Endothelial cell of umbilical vein (primary cell): ENCODE measurements at regions of chr5 and their contacts with region 1.

Region 1: GRCh38 chr5:39148983-39149534 is 70.3 kb downstream of the FYB1 start:
- DNase-seq: peak; percentile 77
- H3K4me3 ChIP-seq: no peak overlapping the region
- H3K27ac ChIP-seq: peak overlapping the region; percentile 88
- H3K4me1 ChIP-seq: peaks cover 10% of the 10 kb centered on the region
- H3K27me3 ChIP-seq: no peaks in the 10 kb centered on the region
- CTCF ChIP-seq: peak; percentile 5 to 22
- POLR2A ChIP-seq: no peak

Region 2: DNA sequence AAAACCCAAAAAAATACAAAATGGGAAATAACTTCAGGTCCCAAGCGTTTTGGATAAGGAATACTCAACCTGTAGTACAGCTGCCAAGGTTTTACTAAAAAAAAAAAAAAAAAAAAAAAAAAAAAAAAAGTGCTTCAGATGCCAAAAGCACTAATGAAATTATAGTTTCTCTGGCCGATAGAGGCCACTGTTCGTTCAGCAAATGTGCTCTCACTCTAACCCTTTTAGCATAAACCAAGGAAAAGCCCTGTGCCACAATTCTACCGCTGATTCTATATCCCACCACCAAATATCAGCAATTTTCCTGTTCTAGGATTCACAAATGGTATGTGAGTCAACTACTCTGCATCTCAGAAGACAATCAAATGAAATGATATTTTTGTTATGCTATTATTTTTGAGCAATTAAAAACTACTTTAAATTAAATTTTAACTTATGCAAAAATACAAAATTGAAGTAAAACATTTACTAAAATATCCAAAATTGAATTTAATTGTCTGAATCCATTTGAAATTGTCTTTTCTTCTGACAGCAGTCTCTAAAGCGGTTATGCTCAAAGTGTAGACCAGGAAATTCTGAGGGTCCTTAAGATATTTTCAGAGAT is 154.6 kb before region 1 on chr5:
- CTCF ChIA-PET with region 1: interaction called, 3 read pairs
- POLR2A ChIA-PET with region 1: no interaction called
- dilution Hi-C with region 1: no loop called
- intact Hi-C with region 1: loop called (anchors 1 kb)
- DNase-seq: peak; percentile 76
- H3K4me3 ChIP-seq: no peak overlapping the region
- H3K27ac ChIP-seq: no peak overlapping the region
- H3K4me1 ChIP-seq: no peaks in the 10 kb centered on the region
- H3K27me3 ChIP-seq: no peaks in the 10 kb centered on the region
- CTCF ChIP-seq: peak; percentile 33 to 50
- POLR2A ChIP-seq: no peak

Region 3: GRCh38 chr5:39106322-39106721 is 42.7 kb before region 1 on chr5:
- CTCF ChIA-PET with region 1: no interaction called
- POLR2A ChIA-PET with region 1: no interaction called
- dilution Hi-C with region 1: no loop called
- intact Hi-C with region 1: loop called (anchors 5 kb)
- DNase-seq: no peak
- H3K4me3 ChIP-seq: no peak overlapping the region
- H3K27ac ChIP-seq: no peak overlapping the region
- H3K4me1 ChIP-seq: peaks cover 13% of the 10 kb centered on the region
- H3K27me3 ChIP-seq: no peaks in the 10 kb centered on the region
- CTCF ChIP-seq: peak in 1 of 2 donors; percentile 2
- POLR2A ChIP-seq: no peak

Region 4: GRCh38 chr5:39283231-39283818 is 134.3 kb after region 1 on chr5:
- CTCF ChIA-PET with region 1: no interaction called
- POLR2A ChIA-PET with region 1: no interaction called
- dilution Hi-C with region 1: no loop called
- intact Hi-C with region 1: loop called (anchors 1 kb)
- DNase-seq: peak; percentile 76
- H3K4me3 ChIP-seq: no peak overlapping the region
- H3K27ac ChIP-seq: no peak overlapping the region
- H3K4me1 ChIP-seq: no peaks in the 10 kb centered on the region
- H3K27me3 ChIP-seq: no peaks in the 10 kb centered on the region
- CTCF ChIP-seq: peak; percentile 50 to 67
- POLR2A ChIP-seq: no peak

Region 5: GRCh38 chr5:39376293-39376714 is 227.2 kb after region 1 on chr5:
- CTCF ChIA-PET with region 1: interaction called, 4 read pairs
- POLR2A ChIA-PET with region 1: no interaction called
- dilution Hi-C with region 1: no loop called
- intact Hi-C with region 1: loop called (anchors 5 kb)
- DNase-seq: peak; percentile 72
- H3K4me3 ChIP-seq: no peak overlapping the region
- H3K27ac ChIP-seq: no peak overlapping the region
- H3K4me1 ChIP-seq: no peaks in the 10 kb centered on the region
- H3K27me3 ChIP-seq: no peaks in the 10 kb centered on the region
- CTCF ChIP-seq: peak; percentile 57 to 71
- POLR2A ChIP-seq: no peak

Region 6: DNA sequence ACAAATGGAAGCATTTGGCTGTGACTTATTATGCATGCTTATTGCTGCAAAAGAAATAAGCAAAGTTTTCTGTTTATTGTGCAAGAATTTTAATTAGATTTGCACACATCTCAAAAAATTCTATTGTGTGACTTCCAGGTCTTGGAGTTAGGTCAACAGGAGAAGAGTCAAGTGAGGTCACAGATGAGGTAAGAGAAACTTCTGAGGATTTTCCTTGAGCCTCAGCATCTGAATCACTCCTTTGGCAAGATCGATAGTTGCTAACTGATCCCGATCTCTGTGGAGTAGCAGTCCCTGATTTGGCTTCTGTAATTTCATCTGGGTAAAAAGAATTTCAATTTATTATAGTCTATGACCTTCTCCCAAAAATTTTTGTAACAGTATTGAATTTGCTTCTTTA is 1613.6 kb after region 1 on chr5:
- CTCF ChIA-PET with region 1: no interaction called
- POLR2A ChIA-PET with region 1: no interaction called
- dilution Hi-C with region 1: no loop called
- intact Hi-C with region 1: no loop called
- DNase-seq: no peak
- H3K4me3 ChIP-seq: no peak overlapping the region
- H3K27ac ChIP-seq: no peak overlapping the region
- H3K4me1 ChIP-seq: no peaks in the 10 kb centered on the region
- H3K27me3 ChIP-seq: no peaks in the 10 kb centered on the region
- CTCF ChIP-seq: no peak
- POLR2A ChIP-seq: no peak